T-cell (primary cell): ENCODE measurements at regions of chr4 and their contacts with region 1.

Region 1: GRCh38 chr4:40309250-40309774 is 25.8 kb upstream of the CHRNA9 start:
- DNase-seq: peak; percentile 72 to 95 (median 88)
- ATAC-seq: peak; percentile 62 to 69 (median 68)
- H3K4me3 ChIP-seq: peak overlapping the region; percentile 30 to 45
- H3K4me3 Mint-ChIP-seq: peak overlapping the region; percentile 66 to 77 (median 71)
- H3K27ac ChIP-seq: peak overlapping the region; percentile 95
- H3K27ac Mint-ChIP-seq: peak overlapping the region; percentile 97 to 99
- H3K4me1 ChIP-seq: peaks cover 65 to 81% of the 10 kb centered on the region in 2 experiments
- H3K4me1 Mint-ChIP-seq: peaks cover 84 to 95% (median 90%) of the 10 kb centered on the region in 3 donors
- H3K27me3 ChIP-seq: no peaks in the 10 kb centered on the region
- H3K27me3 Mint-ChIP-seq: no peaks in the 10 kb centered on the region

Region 2: DNA sequence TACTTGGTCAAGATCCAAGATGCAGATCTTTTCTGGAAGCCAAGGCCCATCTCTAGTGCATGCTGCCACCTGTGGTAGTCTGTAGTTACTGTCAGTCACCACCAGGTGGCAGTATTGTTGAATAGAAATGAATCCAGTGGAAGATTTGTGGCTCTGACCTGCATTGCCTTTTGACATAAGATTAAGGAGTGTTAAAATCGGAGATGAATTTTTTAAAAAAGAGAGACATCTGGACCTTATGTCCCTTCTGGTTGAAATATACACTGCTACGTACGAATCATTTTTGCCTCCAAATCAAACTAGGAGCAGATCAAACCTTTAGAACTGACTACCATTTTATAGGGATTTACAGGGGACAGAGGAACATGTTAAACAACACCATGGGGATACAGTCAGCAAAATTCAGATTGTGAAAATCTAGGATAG is 159.3 kb before region 1 on chr4:
- CTCF ChIA-PET with region 1: interaction called, 11 read pairs
- POLR2A ChIA-PET with region 1: no interaction called
- DNase-seq: peak; percentile 29 to 89 (median 68)
- ATAC-seq: peak; percentile 80 to 91 (median 85)
- H3K4me3 ChIP-seq: no peak overlapping the region
- H3K4me3 Mint-ChIP-seq: no peak overlapping the region
- H3K27ac ChIP-seq: peak overlapping the region; percentile 4
- H3K27ac Mint-ChIP-seq: peak overlapping the region; percentile 87 to 89
- H3K4me1 ChIP-seq: peaks cover 11 to 34% of the 10 kb centered on the region in 2 experiments
- H3K4me1 Mint-ChIP-seq: peaks cover 36 to 41% (median 39%) of the 10 kb centered on the region in 3 donors
- H3K27me3 ChIP-seq: no peaks in the 10 kb centered on the region
- H3K27me3 Mint-ChIP-seq: no peaks in the 10 kb centered on the region

Region 3: DNA sequence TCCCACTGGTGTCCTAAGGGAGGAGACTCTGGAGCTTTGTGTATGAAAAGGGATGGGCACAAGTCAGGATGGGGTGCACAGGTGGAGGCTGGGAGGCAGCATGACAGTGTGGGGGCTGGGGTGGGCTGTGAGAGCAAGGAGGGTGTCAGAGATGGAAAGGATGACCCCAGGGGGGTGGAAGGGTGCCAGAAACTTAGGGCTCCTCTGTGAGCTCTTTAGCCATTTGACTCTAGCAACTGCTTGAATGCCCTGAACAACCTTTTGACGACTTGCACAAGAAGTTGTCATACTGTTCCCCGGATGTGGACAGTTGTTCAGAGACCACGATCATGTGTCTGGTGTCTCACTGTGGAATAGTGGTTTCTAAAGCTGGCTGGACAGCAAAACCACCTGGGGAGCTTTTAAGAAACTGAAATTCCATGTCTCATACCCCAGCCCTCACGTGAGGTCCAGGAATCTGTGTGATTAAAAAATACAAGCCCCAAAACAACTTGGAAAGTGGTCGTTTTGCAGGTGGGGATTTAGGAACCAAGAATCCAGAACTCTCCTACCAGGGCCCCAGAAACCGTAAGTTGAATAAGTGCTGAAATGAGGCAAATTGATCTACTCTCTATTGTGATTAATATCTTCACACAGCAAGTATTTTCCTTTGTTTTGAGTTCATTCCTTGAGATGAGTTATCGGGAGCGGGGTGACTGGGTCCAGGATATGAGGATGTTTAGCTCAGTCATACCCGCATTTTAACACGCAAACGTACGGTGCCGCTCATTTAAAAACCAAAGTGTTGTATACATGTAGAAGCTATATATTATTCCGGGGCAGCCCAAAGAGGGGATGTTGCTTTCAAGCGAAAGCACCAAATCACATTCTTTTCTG is 109.1 kb before region 1 on chr4:
- CTCF ChIA-PET with region 1: interaction called, 5 to 16 read pairs
- POLR2A ChIA-PET with region 1: interaction called, 12 to 13 read pairs
- DNase-seq: peak in 24 of 35 experiments; percentile 39 to 78 (median 49)
- ATAC-seq: peak; percentile 16 to 43 (median 35)
- H3K4me3 ChIP-seq: peak overlapping the region; percentile 87 to 96
- H3K4me3 Mint-ChIP-seq: peak overlapping the region; percentile 96 to 99 (median 98)
- H3K27ac ChIP-seq: peak overlapping the region; percentile 99
- H3K27ac Mint-ChIP-seq: peak overlapping the region; percentile 95 to 96
- H3K4me1 ChIP-seq: peaks cover 33 to 48% of the 10 kb centered on the region in 2 experiments
- H3K4me1 Mint-ChIP-seq: peaks cover 40 to 58% (median 52%) of the 10 kb centered on the region in 3 donors
- H3K27me3 ChIP-seq: no peaks in the 10 kb centered on the region
- H3K27me3 Mint-ChIP-seq: no peaks in the 10 kb centered on the region

Region 4: DNA sequence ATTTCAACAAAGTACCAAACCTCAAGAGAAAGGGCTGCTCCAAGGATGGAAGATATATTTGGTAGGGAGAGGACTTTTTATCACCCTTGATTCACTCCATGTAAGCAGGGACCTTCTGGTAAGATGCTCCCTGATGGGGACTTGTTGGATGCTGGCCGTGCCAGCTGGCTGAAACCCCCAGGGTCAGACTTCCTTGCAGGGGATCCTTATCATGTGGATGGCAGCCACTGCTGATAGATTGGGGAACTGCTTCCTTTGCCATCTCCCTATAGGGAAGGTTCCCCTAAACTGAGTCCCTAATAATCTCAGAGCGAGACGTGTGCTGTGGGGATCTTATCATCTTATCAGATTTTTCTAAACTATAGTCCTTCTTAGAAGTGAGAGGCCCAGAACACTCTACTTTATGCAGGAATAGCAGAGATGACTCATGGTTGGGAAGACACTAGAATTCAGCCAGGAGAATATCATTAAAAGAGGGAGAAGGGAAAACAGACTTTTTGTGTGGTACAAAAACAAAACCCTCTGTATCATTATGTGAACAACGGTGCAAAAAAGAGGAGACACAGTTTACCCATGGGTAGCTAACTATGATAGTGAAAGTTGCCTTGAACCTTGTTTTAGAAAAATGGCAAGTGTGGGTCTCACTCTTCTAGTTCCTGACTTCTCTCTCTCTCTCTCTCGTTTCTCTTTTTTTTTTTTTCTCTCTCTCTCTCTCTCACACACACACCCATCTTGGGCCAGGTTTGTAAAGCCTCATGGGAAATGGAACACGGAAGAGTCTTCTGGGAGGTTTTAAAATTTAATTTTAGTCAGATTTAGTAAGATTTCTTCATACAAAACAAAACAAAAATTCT is 96.4 kb before region 1 on chr4:
- CTCF ChIA-PET with region 1: interaction called, 4 to 46 read pairs
- POLR2A ChIA-PET with region 1: interaction called, 3 to 5 read pairs
- DNase-seq: no peak
- ATAC-seq: no peak
- H3K4me3 ChIP-seq: peak overlapping the region in 1 of 2 donors; percentile 15
- H3K4me3 Mint-ChIP-seq: peak overlapping the region; percentile 62 to 83 (median 78)
- H3K27ac ChIP-seq: peak overlapping the region; percentile 99
- H3K27ac Mint-ChIP-seq: peak overlapping the region; percentile 94 to 96
- H3K4me1 ChIP-seq: peaks cover 74 to 79% of the 10 kb centered on the region in 2 experiments
- H3K4me1 Mint-ChIP-seq: peaks cover 92 to 98% (median 95%) of the 10 kb centered on the region in 3 donors
- H3K27me3 ChIP-seq: no peaks in the 10 kb centered on the region
- H3K27me3 Mint-ChIP-seq: no peaks in the 10 kb centered on the region

Region 5: GRCh38 chr4:40238700-40239548 is 70.4 kb before region 1 on chr4:
- CTCF ChIA-PET with region 1: interaction called in 1 of 2 experiments, 22 read pairs
- POLR2A ChIA-PET with region 1: interaction called, 9 to 13 read pairs
- DNase-seq: peak in 34 of 35 experiments; percentile 56 to 92 (median 79)
- ATAC-seq: peak; percentile 86 to 94 (median 92)
- H3K4me3 ChIP-seq: peak overlapping the region; percentile 28 to 29
- H3K4me3 Mint-ChIP-seq: peak overlapping the region; percentile 67 to 76 (median 73)
- H3K27ac ChIP-seq: peak overlapping the region; percentile 97
- H3K27ac Mint-ChIP-seq: peak overlapping the region; percentile 93 to 95
- H3K4me1 ChIP-seq: peaks cover 67 to 99% of the 10 kb centered on the region in 2 experiments
- H3K4me1 Mint-ChIP-seq: peaks cover 91 to 95% (median 94%) of the 10 kb centered on the region in 3 donors
- H3K27me3 ChIP-seq: no peaks in the 10 kb centered on the region
- H3K27me3 Mint-ChIP-seq: no peaks in the 10 kb centered on the region

Region 6: GRCh38 chr4:40289366-40290188 is 19.7 kb before region 1 on chr4:
- CTCF ChIA-PET with region 1: interaction called, 4 to 28 read pairs
- POLR2A ChIA-PET with region 1: interaction called, 4 to 12 read pairs
- DNase-seq: peak in 17 of 35 experiments; percentile 15 to 59 (median 29)
- ATAC-seq: peak; percentile 84 to 94 (median 90)
- H3K4me3 ChIP-seq: peak overlapping the region in 1 of 2 donors; percentile 12
- H3K4me3 Mint-ChIP-seq: peak overlapping the region; percentile 42 to 62 (median 57)
- H3K27ac ChIP-seq: peak overlapping the region; percentile 63
- H3K27ac Mint-ChIP-seq: peak overlapping the region; percentile 94 to 97
- H3K4me1 ChIP-seq: peaks cover 26 to 40% of the 10 kb centered on the region in 2 experiments
- H3K4me1 Mint-ChIP-seq: peaks cover 16 to 74% (median 63%) of the 10 kb centered on the region in 3 donors
- H3K27me3 ChIP-seq: no peaks in the 10 kb centered on the region
- H3K27me3 Mint-ChIP-seq: no peaks in the 10 kb centered on the region